Activated naive CD4-positive, alpha-beta T cell treated with anti-CD3 and anti-CD28 coated beads for 36 hours (primary cell): ENCODE measurements at regions of chr1 and their contacts with region 1.

Region 1: DNA sequence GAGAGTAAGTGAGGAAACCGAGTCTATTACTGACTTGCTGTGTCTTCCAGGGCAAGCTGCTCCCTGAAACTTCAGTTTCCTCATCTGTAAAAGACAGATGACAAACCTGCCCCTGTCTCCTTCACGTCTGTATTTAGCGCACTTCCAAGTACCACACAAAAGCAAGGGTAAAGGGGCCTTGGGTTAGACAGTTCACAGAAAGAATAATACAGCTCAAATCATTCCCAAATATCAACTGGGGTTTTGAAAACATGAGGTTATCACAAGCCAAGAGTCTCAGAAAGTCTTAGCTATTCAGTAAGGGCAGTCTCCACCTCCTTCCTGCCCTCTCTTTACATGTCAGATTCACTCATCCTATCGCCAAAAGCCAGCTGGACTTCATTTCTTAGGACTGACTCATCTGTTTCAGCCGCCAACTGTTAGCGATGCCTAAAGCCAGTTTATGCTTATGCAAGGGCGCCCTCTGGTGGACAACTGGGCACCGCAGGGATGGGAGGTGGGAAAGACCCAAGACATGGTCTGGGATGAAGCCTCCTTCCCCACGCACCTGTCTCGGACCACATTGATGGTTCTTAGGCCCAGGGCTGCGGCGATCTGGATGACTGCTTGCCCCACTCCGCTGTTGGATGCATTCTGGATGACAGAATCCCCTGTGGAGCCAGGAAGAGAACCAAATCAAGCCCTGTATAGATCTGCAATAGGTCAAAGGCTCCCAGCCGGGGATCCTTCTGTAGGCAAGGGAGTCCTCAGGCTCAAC is 21.1 kb upstream of the SRSF4 start:
- DNase-seq: peak; percentile 97
- H3K4me3 Mint-ChIP-seq: no peak overlapping the region
- H3K27ac Mint-ChIP-seq: no peak overlapping the region
- H3K4me1 Mint-ChIP-seq: peaks cover 6% of the 10 kb centered on the region
- H3K27me3 Mint-ChIP-seq: no peaks in the 10 kb centered on the region

Region 2: DNA sequence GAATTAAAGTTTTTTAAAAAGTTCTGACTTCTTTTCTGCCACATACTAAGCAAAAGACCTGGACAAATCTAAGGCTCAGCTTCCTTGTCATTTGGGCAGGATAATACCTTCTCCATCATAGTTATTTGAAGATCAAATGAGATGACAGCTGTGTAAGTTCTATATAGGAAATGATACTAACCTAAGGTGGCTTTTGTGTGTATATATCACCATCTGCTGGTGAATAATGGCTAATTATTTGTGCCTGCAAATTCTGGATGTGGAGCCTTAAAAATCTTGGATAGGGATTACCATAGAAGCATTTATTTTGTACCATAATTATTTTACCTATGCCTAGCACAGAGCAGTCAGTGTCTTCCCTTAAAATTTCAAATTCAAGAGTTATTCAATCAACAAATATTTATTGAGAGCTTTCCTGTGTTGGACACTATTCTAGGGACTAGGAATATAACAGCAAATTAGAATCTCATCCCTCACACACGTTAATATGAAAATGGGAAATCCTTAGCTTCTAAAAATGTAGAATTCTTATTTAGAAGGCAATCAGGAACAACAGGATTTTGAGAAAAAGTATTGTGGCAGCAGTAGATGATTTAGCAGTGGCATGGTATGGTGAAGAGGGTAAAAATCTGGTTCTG is 168.8 kb before region 1 on chr1:
- CTCF ChIA-PET with region 1: interaction called, 22 read pairs
- intact Hi-C with region 1: loop called (anchors 2 kb)
- DNase-seq: no peak
- H3K4me3 Mint-ChIP-seq: no peak overlapping the region
- H3K27ac Mint-ChIP-seq: no peak overlapping the region
- H3K4me1 Mint-ChIP-seq: no peaks in the 10 kb centered on the region
- H3K27me3 Mint-ChIP-seq: no peaks in the 10 kb centered on the region

Region 3: GRCh38 chr1:29124366-29125236 is 78.2 kb before region 1 on chr1:
- CTCF ChIA-PET with region 1: interaction called, 4 read pairs
- intact Hi-C with region 1: loop called (anchors 1 kb)
- DNase-seq: peak; percentile 64
- H3K4me3 Mint-ChIP-seq: peak overlapping the region; percentile 70
- H3K27ac Mint-ChIP-seq: no peak overlapping the region
- H3K4me1 Mint-ChIP-seq: peaks cover 12% of the 10 kb centered on the region
- H3K27me3 Mint-ChIP-seq: peaks cover 21% of the 10 kb centered on the region

Region 4: DNA sequence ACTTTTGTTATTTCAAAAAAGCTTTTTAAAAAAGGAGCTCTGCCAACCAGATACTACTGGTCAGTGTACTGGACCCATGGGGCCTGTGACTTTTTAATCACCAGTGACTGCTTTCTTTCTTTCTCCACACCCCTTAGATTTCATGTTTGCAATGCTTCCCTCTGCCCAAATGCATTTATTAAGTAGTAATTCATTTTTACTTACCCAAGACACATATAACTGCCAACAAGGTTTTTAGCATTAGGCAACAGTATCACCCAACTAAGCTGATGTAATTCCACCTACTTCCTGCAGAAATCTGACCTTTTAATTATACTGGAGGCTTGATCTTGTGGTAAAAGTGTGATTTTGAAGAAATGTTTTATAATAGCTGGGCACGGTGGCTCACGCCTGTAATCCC is 15.5 kb after region 1 on chr1:
- CTCF ChIA-PET with region 1: interaction called, 13 read pairs
- intact Hi-C with region 1: no loop called
- DNase-seq: no peak
- H3K4me3 Mint-ChIP-seq: no peak overlapping the region
- H3K27ac Mint-ChIP-seq: no peak overlapping the region
- H3K4me1 Mint-ChIP-seq: no peaks in the 10 kb centered on the region
- H3K27me3 Mint-ChIP-seq: no peaks in the 10 kb centered on the region

Region 5: GRCh38 chr1:29256979-29257804 is 54.4 kb after region 1 on chr1:
- CTCF ChIA-PET with region 1: no interaction called
- intact Hi-C with region 1: no loop called
- DNase-seq: no peak
- H3K4me3 Mint-ChIP-seq: no peak overlapping the region
- H3K27ac Mint-ChIP-seq: no peak overlapping the region
- H3K4me1 Mint-ChIP-seq: peaks cover 6% of the 10 kb centered on the region
- H3K27me3 Mint-ChIP-seq: peaks cover 35% of the 10 kb centered on the region